Dorsolateral prefrontal cortex (tissue), 120 donors: ENCODE measurements at regions of chr17 and their contacts with region 1.

Region 1: GRCh38 chr17:59565171-59565969 is at the start of gene DHX40:
- DNase-seq: peak; percentile 87 to 97 (median 93)
- H3K4me3 ChIP-seq: peak within 1 kb of the TSS; percentile 67 to 100 (median 91)
- H3K27ac ChIP-seq: peak within 1 kb of the TSS in 58 of 59 donors; percentile 46 to 91 (median 80)
- H3K27me3 ChIP-seq: no peaks in the 10 kb centered on the region
- CTCF ChIP-seq: peak in 10 of 56 donors; percentile 3 to 22 (median 12)
- total RNA-seq, gene DHX40: 19.1 to 37.5 (median 26.3) TPM

Region 2: DNA sequence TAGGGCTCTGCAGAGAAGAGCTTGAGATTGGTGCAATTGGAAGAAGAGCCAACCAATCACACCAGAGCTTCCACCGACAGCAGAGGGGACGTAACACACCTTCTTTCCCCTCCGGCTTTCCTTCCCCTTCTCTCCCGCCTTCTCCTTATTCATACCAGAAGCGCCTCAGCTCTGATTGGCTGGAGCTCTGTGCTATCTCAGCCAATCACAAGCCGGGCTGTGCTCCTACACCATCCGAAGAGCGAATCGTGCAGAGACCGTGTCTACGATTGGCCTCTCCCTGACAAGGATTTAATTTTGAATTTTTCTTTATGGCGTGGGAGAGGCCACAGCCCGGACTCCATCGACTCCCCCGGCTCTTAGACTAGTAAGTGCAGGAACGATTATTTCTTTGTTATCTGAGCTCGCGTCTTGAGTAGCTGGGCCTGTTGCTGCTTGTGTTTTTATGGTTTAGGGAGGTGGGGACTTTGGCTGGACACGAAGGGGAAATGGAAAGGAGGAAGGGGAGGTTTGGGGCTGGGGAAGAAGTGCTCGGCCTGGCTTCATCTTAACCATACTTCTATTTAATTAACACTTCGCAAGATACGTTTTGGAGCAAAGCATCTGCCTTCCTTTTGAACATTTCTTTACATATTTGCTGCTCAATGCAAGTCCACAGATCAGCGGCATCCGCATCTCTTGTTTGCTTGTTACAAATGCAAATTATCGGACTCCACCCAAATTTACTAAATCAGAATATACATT is 409.8 kb before region 1 on chr17 and contains the start of gene PRR11:
- intact Hi-C with region 1: loop called in 1 of 2 experiments (anchors 5 kb)
- DNase-seq: peak; percentile 90 to 99 (median 98)
- H3K4me3 ChIP-seq: peak within 1 kb of the TSS; percentile 56 to 95 (median 80)
- H3K27ac ChIP-seq: peak within 1 kb of the TSS; percentile 32 to 96 (median 89)
- H3K27me3 ChIP-seq: no peaks in the 10 kb centered on the region
- CTCF ChIP-seq: peak in 4 of 56 donors; percentile 2 to 31 (median 18)
- total RNA-seq, gene PRR11: 1.0 to 7.2 (median 2.9) TPM

Region 3: GRCh38 chr17:59220376-59221158 is 344.8 kb before region 1 on chr17 and contains the start of gene GDPD1:
- intact Hi-C with region 1: loop called in 1 of 2 experiments (anchors 10 kb)
- DNase-seq: peak; percentile 90 to 97 (median 95)
- H3K4me3 ChIP-seq: peak within 1 kb of the TSS; percentile 62 to 99 (median 92)
- H3K27ac ChIP-seq: peak within 1 kb of the TSS; percentile 71 to 99 (median 92)
- H3K27me3 ChIP-seq: no peaks in the 10 kb centered on the region
- CTCF ChIP-seq: peak; percentile 62 to 95 (median 83)
- total RNA-seq, gene GDPD1: 20.6 to 54.8 (median 38.9) TPM

Region 4: GRCh38 chr17:59440784-59441441 is 124.5 kb before region 1 on chr17:
- intact Hi-C with region 1: loop called (anchors 10 kb)
- DNase-seq: peak; percentile 70 to 96 (median 90)
- H3K4me3 ChIP-seq: peak overlapping the region in 35 of 59 donors; percentile 1 to 51 (median 15)
- H3K27ac ChIP-seq: peak overlapping the region in 57 of 59 donors; percentile 9 to 90 (median 73)
- H3K27me3 ChIP-seq: no peaks in the 10 kb centered on the region
- CTCF ChIP-seq: peak; percentile 74 to 98 (median 93)

Region 5: GRCh38 chr17:59527325-59527917 is 37.9 kb before region 1 on chr17:
- intact Hi-C with region 1: loop called in 1 of 2 experiments (anchors 5 kb)
- DNase-seq: no peak
- H3K4me3 ChIP-seq: no peak overlapping the region
- H3K27ac ChIP-seq: peak overlapping the region in 30 of 59 donors; percentile 3 to 73 (median 42)
- H3K27me3 ChIP-seq: no peaks in the 10 kb centered on the region
- CTCF ChIP-seq: no peak

Region 6: DNA sequence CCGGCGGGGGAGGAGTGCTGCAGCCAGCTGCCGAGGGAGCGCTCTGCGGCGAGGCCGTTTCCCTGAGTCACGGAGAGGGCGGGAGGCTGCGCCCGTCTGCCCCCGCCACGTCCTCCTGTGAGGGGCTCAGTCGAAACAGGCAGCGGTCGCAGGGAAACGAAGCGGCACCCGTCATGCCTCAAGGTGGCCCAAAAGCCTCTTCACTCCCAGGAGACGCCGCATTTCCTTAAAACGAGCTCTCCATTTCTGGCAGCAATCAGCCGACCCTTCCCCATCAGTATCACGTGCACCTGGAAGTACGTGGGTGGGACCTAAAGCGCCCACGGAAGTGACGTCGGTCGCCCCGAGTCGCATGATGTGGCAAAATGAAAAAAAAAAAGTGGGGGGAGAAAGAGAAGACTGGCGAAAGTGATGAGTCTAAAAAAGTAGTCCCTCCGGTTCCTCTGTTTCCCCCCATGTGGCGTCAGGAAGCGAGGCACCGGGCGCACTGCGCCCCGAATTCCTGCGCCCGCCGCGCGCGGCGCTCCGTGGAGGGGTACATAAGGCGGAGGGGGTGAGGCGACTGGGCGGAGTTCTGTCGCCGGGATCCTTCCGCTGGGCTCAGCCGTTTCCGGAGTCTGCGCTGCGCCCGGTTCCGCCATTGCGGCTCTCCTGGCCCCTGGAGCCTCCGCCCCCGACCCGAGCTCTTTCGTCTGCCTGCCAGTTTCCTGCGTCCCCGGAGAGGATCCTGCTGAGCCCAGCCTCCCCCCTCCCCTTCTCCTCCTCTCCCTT is 54.1 kb after region 1 on chr17 and contains the start of gene CLTC:
- intact Hi-C with region 1: loop called (anchors 5 to 10 kb)
- DNase-seq: peak; percentile 80 to 98 (median 92)
- H3K4me3 ChIP-seq: peak within 1 kb of the TSS; percentile 57 to 98 (median 89)
- H3K27ac ChIP-seq: peak within 1 kb of the TSS; percentile 96 to 100 (median 99)
- H3K27me3 ChIP-seq: no peaks in the 10 kb centered on the region
- CTCF ChIP-seq: peak in 27 of 56 donors; percentile 1 to 51 (median 13)
- total RNA-seq, gene CLTC: 248 to 525 (median 428) TPM

Region 7: GRCh38 chr17:59676716-59677115 is 111.3 kb after region 1 on chr17:
- intact Hi-C with region 1: no loop called
- DNase-seq: no peak
- H3K4me3 ChIP-seq: no peak overlapping the region
- H3K27ac ChIP-seq: peak overlapping the region in 21 of 59 donors; percentile 1 to 56 (median 20)
- H3K27me3 ChIP-seq: no peaks in the 10 kb centered on the region
- CTCF ChIP-seq: no peak

Region 8: DNA sequence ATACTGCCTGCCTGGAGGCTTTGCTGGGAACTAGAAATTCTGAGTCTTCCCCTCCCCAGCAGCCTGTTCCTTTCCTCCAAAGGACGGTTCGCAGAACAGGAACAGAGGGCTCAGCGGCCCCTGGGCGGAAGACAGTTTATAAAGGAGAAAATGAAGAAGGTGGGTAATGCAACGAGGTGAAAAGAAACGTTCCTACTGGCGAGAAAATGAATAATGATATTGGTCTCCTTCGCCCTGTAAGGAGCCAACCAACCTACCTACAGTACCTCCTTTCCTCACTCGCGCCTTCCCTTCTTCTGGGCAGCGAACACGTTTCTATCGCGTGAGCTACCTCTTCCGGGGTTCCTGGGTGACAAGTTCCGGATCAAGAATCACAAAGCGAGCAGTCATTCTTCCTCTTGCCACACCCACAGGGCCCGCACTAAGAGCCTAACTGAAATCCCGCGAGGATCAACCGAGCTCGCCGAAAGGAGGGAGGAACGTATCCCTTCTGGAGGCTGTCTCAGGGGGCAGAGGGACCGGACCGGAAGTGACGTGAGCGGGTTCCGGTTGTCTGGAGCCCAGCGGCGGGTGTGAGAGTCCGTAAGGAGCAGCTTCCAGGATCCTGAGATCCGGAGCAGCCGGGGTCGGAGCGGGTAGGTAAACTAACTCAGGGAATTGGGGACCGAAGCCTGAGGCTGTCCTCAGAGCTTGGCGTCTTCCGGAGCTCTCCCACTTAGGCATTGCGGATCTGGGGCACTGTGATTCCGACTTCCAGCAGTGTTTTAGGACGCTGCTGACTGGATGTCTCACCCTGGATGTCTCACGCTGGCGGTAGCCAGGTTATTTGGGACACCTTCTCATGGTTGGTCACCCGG is 142.0 kb after region 1 on chr17 and contains the starts of genes PTRH2 and VMP1:
- intact Hi-C with region 1: loop called in 1 of 2 experiments (anchors 10 kb)
- DNase-seq: peak; percentile 97 to 100 (median 98)
- H3K4me3 ChIP-seq: peak within 1 kb of the TSS; percentile 37 to 100 (median 91)
- H3K27ac ChIP-seq: peak within 1 kb of the TSS; percentile 6 to 96 (median 86)
- H3K27me3 ChIP-seq: no peaks in the 10 kb centered on the region
- CTCF ChIP-seq: peak in 29 of 56 donors; percentile 10 to 58 (median 33)
- total RNA-seq, gene PTRH2: 9.8 to 28.4 (median 20.0) TPM
- total RNA-seq, gene VMP1: 80.9 to 231 (median 127) TPM